ENCODE measurements at regions of chr3 and their contacts with region 1.

Region 1: DNA sequence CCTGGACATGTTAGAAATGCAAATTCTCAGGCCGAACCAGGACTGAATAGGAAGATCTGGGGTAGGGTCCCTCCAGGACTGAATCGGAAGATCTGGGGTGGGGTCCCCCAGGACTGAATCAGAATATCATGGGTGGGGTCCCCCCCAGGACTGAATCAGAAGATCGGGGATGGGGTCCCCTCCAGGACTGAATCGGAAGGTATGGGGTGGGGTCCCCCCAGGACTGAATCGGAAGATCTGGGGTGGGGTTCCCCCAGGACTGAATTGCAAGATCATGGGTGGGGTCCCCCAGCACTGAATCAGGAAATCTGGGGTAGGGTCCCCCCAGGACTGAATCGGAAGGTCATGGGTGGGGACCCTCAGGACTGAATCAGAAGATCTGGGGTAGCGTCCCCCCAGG is 48.2 kb upstream of the TNK2 start:
- ATAC-seq: no peak
- H3K4me3 ChIP-seq: no peak overlapping the region
- H3K27ac ChIP-seq: no peak overlapping the region
- H3K4me1 ChIP-seq: no peaks in the 10 kb centered on the region

Region 2: DNA sequence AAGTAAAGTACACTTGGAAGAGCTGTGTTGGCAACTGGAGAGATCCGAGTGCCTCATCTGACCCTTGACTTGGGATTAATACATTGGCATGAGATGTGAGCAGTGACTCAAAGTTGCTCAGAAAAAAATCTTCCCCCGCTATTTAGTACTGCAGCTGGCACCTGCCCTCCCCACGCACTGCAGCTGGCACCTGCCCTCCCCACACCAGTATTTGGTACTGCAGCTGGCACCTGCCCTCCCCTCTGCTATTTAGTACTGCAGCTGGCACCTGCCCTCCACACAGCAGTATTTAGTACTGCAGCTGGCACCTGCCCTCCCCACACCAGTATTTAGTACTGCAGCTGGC is 239.7 kb before region 1 on chr3:
- in situ Hi-C with region 1: loop called in 1 of 9 experiments (anchors 25 kb)
- ATAC-seq: no peak
- H3K4me3 ChIP-seq: no peak overlapping the region
- H3K27ac ChIP-seq: no peak overlapping the region
- H3K4me1 ChIP-seq: peaks cover 0 to 4% of the 10 kb centered on the region in 2 donors

Measured in motor neuron (in vitro differentiated cells).